ENCODE measurements at regions of chr19 and their contacts with region 1.

Region 1: GRCh38 chr19:41353466-41354342 is at the start of gene TGFB1:
- DNase-seq: peak; percentile 39 to 91
- H3K4me3 ChIP-seq: peak within 1 kb of the TSS; percentile 80
- H3K27ac ChIP-seq: no peak within 1 kb of the TSS
- H3K4me1 ChIP-seq: peaks cover 15% of the 10 kb centered on the region
- H3K27me3 ChIP-seq: no peaks in the 10 kb centered on the region
- CTCF ChIP-seq: peak; percentile 79
- total RNA-seq, gene TGFB1: 67.9 and 74.9 TPM in 2 replicates

Region 2: GRCh38 chr19:41263850-41264580 is 89.7 kb before region 1 on chr19 and contains the start of gene HNRNPUL1:
- CTCF ChIA-PET with region 1: interaction called, 3 read pairs
- POLR2A ChIA-PET with region 1: interaction called, 6 read pairs
- intact Hi-C with region 1: loop called (anchors 1 kb)
- DNase-seq: peak; percentile 99 to 100
- H3K4me3 ChIP-seq: peak within 1 kb of the TSS; percentile 85
- H3K27ac ChIP-seq: peak within 1 kb of the TSS; percentile 90
- H3K4me1 ChIP-seq: peaks cover 10% of the 10 kb centered on the region; the same call in 1 of the 2 replicates
- H3K27me3 ChIP-seq: no peaks in the 10 kb centered on the region
- CTCF ChIP-seq: no peak
- total RNA-seq, gene HNRNPUL1: 248 and 266 TPM in 2 replicates

Region 3: GRCh38 chr19:41327576-41328156 is 26.0 kb before region 1 on chr19:
- CTCF ChIA-PET with region 1: no interaction called
- POLR2A ChIA-PET with region 1: interaction called, 3 read pairs
- intact Hi-C with region 1: loop called (anchors 2 kb)
- DNase-seq: peak; percentile 65 to 92
- H3K4me3 ChIP-seq: peak overlapping the region; percentile 30; the same call in 1 of the 2 replicates
- H3K27ac ChIP-seq: no peak overlapping the region
- H3K4me1 ChIP-seq: peaks cover 16% of the 10 kb centered on the region
- H3K27me3 ChIP-seq: no peaks in the 10 kb centered on the region
- CTCF ChIP-seq: no peak

Region 4: DNA sequence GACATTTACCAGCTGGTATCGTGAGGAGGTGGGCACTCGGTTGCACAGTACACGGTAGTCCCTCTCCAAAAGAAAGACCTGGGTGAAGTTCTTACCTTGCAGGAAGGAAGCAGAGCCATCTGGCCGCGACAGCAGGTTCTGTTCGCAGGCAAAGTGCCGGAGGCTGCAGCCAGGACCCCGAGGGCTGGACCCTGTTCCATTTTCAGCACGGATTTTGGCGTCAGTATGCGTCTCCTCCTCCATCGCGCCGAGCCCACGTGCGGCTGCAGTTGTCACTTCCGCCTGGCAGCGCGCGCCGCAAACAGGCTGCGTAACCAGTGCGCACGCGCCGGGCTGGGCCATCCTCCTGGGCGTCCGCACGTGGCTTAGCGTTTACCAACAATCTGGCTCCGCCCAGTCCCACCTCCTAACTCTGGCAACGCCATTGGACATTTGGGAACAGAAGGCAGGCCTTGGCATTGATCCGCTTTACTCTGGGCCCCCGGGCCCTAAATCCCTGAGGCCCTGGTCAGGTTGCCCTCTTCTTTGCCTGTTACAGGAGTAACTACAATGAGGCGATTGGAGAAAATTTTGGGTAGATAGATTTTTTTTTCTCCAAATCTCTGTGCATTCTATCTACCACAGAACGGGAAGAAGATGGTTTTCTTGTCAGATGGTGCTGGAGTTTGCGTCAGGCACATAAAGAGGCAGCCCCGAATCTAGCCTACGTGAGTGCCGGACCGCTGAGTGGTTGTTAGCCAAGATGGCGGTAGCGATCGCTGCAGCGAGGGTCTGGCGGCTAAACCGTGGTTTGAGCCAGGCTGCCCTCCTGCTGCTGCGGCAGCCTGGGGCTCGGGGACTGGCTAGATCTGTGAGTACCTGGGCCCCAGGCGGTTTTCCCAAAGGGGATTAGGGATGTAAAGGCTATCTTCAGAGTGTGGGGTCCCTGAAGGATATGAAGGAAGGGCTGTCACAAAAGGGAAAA is 43.7 kb after region 1 on chr19 and contains the starts of genes BCKDHA and EXOSC5:
- CTCF ChIA-PET with region 1: no interaction called
- POLR2A ChIA-PET with region 1: no interaction called
- intact Hi-C with region 1: loop called (anchors 2 kb)
- DNase-seq: peak; percentile 98 to 99
- H3K4me3 ChIP-seq: peak within 1 kb of the TSS; percentile 100
- H3K27ac ChIP-seq: peak within 1 kb of the TSS; percentile 79
- H3K4me1 ChIP-seq: peaks cover 19% of the 10 kb centered on the region
- H3K27me3 ChIP-seq: no peaks in the 10 kb centered on the region
- CTCF ChIP-seq: no peak
- total RNA-seq, gene BCKDHA: 26.3 and 28.4 TPM in 2 replicates
- total RNA-seq, gene EXOSC5: 37.7 and 43.7 TPM in 2 replicates